H1 (cell line): ENCODE measurements at regions of chr6 and their contacts with region 1.

Region 1: DNA sequence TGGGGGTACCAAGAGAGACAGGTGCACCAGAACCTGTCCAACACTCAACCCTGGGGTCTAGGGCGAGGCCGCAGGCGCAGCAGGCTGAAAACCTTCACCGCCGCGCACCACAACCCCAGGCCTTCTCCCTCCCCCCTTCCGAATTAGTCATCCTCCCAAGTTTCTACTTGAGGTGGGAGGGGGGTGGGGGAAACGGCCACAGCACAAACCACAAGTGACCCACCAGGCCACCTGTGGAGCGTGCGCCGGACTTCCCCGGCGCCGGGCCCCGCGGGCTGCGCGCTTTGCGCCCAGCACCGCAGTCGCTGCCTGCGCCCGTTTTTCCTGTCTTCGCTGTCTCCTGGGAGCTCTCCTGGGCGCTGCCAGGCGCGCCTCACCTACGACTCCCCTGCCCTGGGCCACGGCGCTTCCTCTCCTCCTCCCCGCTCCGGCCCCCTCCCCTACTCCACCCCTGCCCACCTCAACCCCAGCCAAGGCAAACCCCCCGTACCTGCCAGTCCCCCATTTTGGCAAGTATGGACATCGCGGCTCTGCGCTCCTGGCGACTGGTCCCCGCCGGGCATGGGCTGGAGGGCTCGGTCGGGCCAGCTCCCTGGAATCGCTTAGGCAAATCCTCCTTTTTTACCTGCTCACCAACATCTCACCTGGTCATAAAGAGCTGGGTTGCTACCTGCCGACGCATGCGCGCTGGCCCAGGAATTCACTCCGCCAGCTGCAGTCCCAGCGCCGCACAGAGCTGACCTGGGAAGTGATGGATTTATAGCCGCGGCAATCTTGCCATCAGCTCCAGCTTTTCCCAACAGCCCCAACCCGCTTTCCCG is 4.3 kb upstream of the TFAP2A start:
- DNase-seq: peak in 1 of 2 experiments; percentile 85
- H3K4me3 ChIP-seq: peak overlapping the region; percentile 19 to 53 (median 34)
- H3K27ac ChIP-seq: no peak overlapping the region
- H3K4me1 ChIP-seq: peaks cover 6 to 54% (median 38%) of the 10 kb centered on the region in 4 experiments
- H3K27me3 ChIP-seq: peaks cover 86 to 100% (median 98%) of the 10 kb centered on the region in 4 experiments
- CTCF ChIP-seq: no peak
- EP300 ChIP-seq: no peak
- POLR2A ChIP-seq: no peak
- RAD21 ChIP-seq: no peak

Region 2: DNA sequence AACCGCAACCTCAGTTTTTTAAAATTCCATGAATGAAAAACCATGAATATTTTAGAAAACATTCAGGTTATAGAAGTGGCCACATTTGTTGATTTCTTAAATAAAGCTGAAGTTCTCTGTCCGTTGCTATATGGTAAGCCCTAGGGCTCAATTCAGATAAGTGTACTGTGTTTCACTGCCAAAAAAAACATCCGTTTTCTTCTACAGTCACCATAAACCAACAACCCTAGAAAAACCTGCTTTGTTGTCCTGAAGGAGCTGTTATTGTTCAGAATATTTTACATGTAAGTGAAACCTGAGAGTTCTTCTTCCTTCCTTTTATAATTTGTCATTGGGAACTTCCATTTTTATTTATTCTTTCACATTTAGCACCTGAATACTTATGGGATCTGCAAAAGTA is 278.3 kb before region 1 on chr6:
- CTCF ChIA-PET with region 1: no interaction called
- POLR2A ChIA-PET with region 1: no interaction called
- DNase-seq: no peak
- H3K4me3 ChIP-seq: no peak overlapping the region
- H3K27ac ChIP-seq: no peak overlapping the region
- H3K4me1 ChIP-seq: no peaks in the 10 kb centered on the region
- H3K27me3 ChIP-seq: no peaks in the 10 kb centered on the region
- CTCF ChIP-seq: no peak
- EP300 ChIP-seq: no peak
- POLR2A ChIP-seq: no peak
- RAD21 ChIP-seq: no peak

Region 3: DNA sequence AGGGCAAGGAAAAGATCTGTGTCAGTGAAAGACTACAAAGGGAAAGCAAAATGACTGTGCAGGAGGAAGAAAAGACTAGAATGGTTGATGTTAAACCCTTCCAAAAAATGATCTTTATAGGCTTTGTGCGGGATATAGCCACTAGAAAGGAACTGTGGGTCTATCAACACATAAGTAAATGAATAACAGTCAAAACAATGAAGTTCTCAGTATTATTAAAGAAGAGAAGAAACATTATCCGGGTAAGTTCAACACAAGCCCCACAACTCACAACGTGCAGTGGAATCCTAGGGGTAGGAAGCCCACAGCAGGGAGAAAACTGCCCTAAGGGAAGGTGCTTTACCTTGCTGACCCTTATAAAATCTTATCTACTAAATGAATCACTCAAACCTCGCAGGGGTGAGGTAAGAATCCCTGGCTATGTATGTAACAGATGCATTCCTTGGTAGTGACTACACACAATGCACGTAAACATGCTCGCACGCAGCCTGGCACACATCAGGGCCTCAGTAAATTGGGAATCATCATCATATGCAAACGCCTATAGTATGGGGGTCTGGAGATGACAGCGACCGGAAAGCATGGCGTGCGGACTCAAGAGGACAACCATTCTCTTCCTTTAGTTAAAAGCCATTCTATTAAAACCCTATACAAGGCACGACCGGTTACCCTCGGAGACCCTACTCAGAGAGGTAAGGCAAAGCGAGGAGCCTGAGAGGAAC is 15.6 kb before region 1 on chr6:
- CTCF ChIA-PET with region 1: interaction called, 135 read pairs
- POLR2A ChIA-PET with region 1: interaction called, 9 read pairs
- DNase-seq: no peak
- H3K4me3 ChIP-seq: peak overlapping the region; percentile 34 to 60 (median 44); a peak in 6 of 8 replicates
- H3K27ac ChIP-seq: no peak overlapping the region
- H3K4me1 ChIP-seq: peaks cover 2 to 17% (median 12%) of the 10 kb centered on the region in 4 experiments
- H3K27me3 ChIP-seq: peaks cover 61 to 92% (median 79%) of the 10 kb centered on the region in 4 experiments
- CTCF ChIP-seq: no peak
- EP300 ChIP-seq: no peak
- POLR2A ChIP-seq: no peak
- RAD21 ChIP-seq: no peak

Region 4: DNA sequence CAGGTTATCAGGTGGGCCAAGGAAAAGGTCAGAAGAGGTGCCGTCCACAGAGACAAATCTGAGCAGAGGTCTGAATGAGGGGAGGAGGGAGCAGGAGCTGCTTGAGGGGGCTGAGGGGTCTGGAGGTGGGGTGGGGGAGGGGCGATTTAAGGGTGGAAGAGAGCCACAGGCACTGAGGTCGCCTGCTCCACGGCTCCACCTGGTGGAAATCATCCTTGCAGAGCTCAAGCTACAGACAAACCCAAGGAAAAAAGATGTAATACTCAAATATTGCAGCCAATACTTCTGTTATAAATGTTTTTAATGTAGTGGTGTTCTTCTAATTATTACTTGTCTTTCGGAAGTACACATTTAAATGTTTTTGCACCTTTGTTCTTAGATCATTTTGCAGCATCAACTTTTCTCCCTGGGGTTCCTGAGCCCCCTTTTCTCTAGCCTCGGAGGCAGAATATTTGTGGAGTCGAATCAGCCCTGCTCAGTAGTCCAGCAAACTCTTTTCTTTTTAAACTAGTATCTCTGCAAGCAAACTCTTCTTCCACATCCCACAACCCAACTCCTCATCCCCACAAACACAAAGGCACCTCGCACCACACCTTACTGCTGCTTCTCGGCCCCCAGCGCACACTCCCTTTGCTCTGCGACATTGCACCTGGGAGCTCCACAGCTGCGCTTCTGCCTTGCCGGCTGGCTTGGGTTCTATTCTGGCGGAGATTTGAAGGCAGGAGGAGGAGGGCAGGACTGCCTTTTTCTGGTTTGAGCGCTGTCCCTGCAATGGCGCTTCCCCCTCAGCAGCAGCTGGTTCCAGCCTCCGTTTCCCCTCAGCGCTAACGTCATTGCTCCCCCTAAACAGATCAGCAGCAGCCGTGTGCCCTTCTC is 46.7 kb after region 1 on chr6:
- CTCF ChIA-PET with region 1: interaction called, 12 read pairs
- POLR2A ChIA-PET with region 1: no interaction called
- DNase-seq: peak in 1 of 2 experiments; percentile 85
- H3K4me3 ChIP-seq: no peak overlapping the region
- H3K27ac ChIP-seq: no peak overlapping the region
- H3K4me1 ChIP-seq: peaks cover 0 to 5% (median 4%) of the 10 kb centered on the region in 4 experiments; a peak in 5 of 7 replicates
- H3K27me3 ChIP-seq: no peaks in the 10 kb centered on the region
- CTCF ChIP-seq: peak; percentile 64 to 77 (median 71)
- EP300 ChIP-seq: no peak
- POLR2A ChIP-seq: no peak
- RAD21 ChIP-seq: peak; percentile 51 to 56